ENCODE measurements at regions of chr2 and their contacts with region 1.

Region 1: GRCh38 chr2:28681158-28681571 is 70.5 kb upstream of the PPP1CB start:
- DNase-seq: peak; percentile 84
- ATAC-seq: peak; percentile 93
- H3K4me3 Mint-ChIP-seq: peak overlapping the region; percentile 52
- H3K27ac Mint-ChIP-seq: peak overlapping the region; percentile 95
- H3K4me1 Mint-ChIP-seq: peaks cover 40% of the 10 kb centered on the region
- H3K27me3 Mint-ChIP-seq: no peaks in the 10 kb centered on the region
- CTCF ChIP-seq: no peak

Region 2: DNA sequence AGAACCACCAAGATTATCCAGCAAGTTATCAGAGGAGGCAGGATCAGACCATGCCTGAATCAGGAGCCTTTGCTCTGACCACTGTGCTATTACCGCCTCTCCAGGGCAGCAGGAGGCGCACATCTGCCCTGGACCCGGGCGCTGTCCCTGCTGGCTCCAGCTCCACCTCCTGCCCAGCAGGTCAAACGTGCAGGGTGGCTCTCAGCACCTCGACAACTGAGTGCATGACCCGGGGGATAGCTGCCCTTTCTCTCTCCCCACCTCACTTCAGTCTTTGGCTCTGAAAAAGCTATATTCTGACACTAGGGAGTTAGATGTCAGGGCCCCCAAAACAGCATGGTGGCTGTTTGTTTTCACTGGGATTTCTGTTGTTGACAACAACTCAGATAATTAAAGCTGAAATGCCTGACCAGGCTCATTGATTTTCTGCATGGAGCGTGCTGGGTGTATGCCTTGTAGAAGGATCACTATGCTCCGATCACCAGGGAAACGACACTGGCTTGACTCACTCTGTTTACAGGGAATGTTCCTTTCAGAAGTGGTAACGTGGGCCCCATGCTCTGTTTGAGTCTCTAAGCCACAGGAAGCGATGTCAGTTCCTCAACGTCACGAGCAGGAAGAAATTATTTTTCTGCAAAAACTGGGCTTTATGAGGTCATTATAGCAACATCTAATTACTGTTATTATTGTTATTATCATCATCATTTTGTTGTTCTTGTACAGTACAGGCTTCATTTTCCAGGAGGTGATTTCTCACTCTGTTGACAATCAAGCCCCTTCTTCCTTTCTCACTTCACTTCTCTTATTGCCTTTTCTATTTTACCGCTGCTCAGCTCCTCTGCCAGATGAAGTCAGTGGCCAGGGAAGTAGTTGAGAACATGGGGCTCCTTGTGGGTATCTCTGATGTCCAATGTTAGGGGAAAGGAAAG is 59.7 kb before region 1 on chr2:
- CTCF ChIA-PET with region 1: no interaction called
- POLR2A ChIA-PET with region 1: interaction called, 5 read pairs
- intact Hi-C with region 1: loop called (anchors 5 kb)
- DNase-seq: peak; percentile 79
- ATAC-seq: peak; percentile 43
- H3K4me3 Mint-ChIP-seq: peak overlapping the region; percentile 41
- H3K27ac Mint-ChIP-seq: peak overlapping the region; percentile 94
- H3K4me1 Mint-ChIP-seq: peaks cover 94% of the 10 kb centered on the region
- H3K27me3 Mint-ChIP-seq: no peaks in the 10 kb centered on the region
- CTCF ChIP-seq: no peak

Measured in activated CD8-positive, alpha-beta T cell treated with anti-CD3 and anti-CD28 coated beads for 36 hours (primary cell).